ENCODE measurements at regions of chr13 and their contacts with region 1.

Region 1: GRCh38 chr13:49356223-49356622 is 87.6 kb downstream of the CAB39L start:
- DNase-seq: no peak
- H3K4me3 ChIP-seq: no peak overlapping the region
- H3K27ac ChIP-seq: peak overlapping the region; percentile 73 to 82 (median 76)
- H3K4me1 ChIP-seq: peaks cover 0 to 64% (median 49%) of the 10 kb centered on the region in 4 donors
- H3K27me3 ChIP-seq: no peaks in the 10 kb centered on the region
- CTCF ChIP-seq: no peak
- EP300 ChIP-seq: no peak
- POLR2A ChIP-seq: no peak

Region 2: GRCh38 chr13:49314344-49314882 is 41.8 kb before region 1 on chr13:
- intact Hi-C with region 1: loop called (anchors 5 kb)
- DNase-seq: no peak
- H3K4me3 ChIP-seq: no peak overlapping the region
- H3K27ac ChIP-seq: peak overlapping the region; percentile 73 to 85 (median 79)
- H3K4me1 ChIP-seq: peaks cover 0 to 46% (median 29%) of the 10 kb centered on the region in 4 donors
- H3K27me3 ChIP-seq: no peaks in the 10 kb centered on the region
- CTCF ChIP-seq: no peak
- EP300 ChIP-seq: no peak
- POLR2A ChIP-seq: no peak

Region 3: DNA sequence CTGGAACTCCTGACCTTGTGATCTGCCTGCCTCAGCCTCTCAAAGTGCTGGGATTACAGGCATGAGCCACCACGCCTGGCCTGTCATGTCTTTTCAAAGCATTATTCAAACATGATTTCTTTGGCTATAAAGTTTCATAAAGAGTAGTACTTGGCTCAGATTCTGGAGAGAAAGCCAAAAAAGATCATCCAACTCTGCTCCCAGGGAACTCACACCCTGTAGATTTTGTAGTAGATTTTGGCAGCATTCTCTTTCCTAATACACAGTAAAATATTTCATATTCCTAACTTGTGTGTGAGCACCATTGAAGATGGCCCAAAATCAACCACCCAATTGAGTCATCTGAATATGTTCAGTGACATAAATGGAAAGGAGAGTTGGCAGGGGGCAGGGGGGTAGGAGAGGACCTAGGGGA is 39.2 kb after region 1 on chr13:
- intact Hi-C with region 1: loop called (anchors 5 kb)
- DNase-seq: peak; percentile 71
- H3K4me3 ChIP-seq: peak overlapping the region in 1 of 4 donors; percentile 56
- H3K27ac ChIP-seq: peak overlapping the region; percentile 72 to 89 (median 82)
- H3K4me1 ChIP-seq: peaks cover 0 to 57% (median 32%) of the 10 kb centered on the region in 4 donors
- H3K27me3 ChIP-seq: no peaks in the 10 kb centered on the region
- CTCF ChIP-seq: no peak
- EP300 ChIP-seq: no peak
- POLR2A ChIP-seq: no peak

Measured in sigmoid colon (tissue), 7 donors.